Right ventricle myocardium inferior (tissue), 1 donor: ENCODE measurements at regions of chrX and their contacts with region 1.

Region 1: GRCh38 chrX:13360146-13360545 is 40.3 kb upstream of the ATXN3L start:
- DNase-seq: no peak
- ATAC-seq: peak; percentile 92

Region 2: GRCh38 chrX:13478740-13479451 is 118.8 kb after region 1 on chrX:
- intact Hi-C with region 1: loop called (anchors 1 kb)
- DNase-seq: no peak
- ATAC-seq: peak; percentile 84